Adrenal gland (tissue), 19 donors: ENCODE measurements at regions of chr14 and their contacts with region 1.

Region 1: GRCh38 chr14:69242311-69243224 is 17.4 kb upstream of the GALNT16 start:
- DNase-seq: peak; percentile 63 to 92 (median 74)
- H3K4me3 ChIP-seq: no peak overlapping the region
- H3K27ac ChIP-seq: peak overlapping the region in 2 of 5 donors; percentile 13 to 32
- H3K4me1 ChIP-seq: peaks cover 4 to 6% of the 10 kb centered on the region in 2 donors
- H3K27me3 ChIP-seq: no peaks in the 10 kb centered on the region
- CTCF ChIP-seq: peak; percentile 65 to 93 (median 85)
- POLR2A ChIP-seq: no peak

Region 2: GRCh38 chr14:69354383-69355153 is 112.0 kb after region 1 on chr14:
- intact Hi-C with region 1: loop called in 1 of 2 experiments (anchors 5 kb)
- DNase-seq: no peak
- H3K4me3 ChIP-seq: no peak overlapping the region
- H3K27ac ChIP-seq: peak overlapping the region in 1 of 5 donors; percentile 3
- H3K4me1 ChIP-seq: peaks cover 0 to 10% of the 10 kb centered on the region in 2 donors
- H3K27me3 ChIP-seq: no peaks in the 10 kb centered on the region
- CTCF ChIP-seq: no peak
- POLR2A ChIP-seq: no peak

Region 3: DNA sequence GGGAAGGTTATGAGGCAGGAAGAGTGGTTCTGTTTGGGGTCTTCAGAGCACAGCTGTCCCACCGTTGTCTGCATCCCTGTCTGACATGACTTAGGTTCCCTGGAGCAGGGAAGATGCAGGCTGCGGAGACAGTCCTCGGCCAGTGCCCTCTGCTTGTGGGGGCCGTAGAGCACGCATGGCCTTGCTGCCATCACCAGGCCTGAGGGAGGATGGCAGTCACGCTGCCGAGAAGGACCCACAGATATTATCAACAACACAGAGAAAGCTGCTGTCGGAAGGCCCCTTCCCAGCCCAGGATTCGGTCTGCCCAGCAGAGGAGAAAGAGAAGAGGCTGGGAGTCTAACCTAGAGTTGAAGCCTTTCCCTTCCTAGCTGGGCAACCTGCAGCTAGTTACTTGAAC is 120.5 kb after region 1 on chr14:
- intact Hi-C with region 1: loop called (anchors 5 kb)
- DNase-seq: peak; percentile 42 to 76 (median 63)
- H3K4me3 ChIP-seq: no peak overlapping the region
- H3K27ac ChIP-seq: no peak overlapping the region
- H3K4me1 ChIP-seq: no peaks in the 10 kb centered on the region
- H3K27me3 ChIP-seq: no peaks in the 10 kb centered on the region
- CTCF ChIP-seq: peak; percentile 25 to 72 (median 60)
- POLR2A ChIP-seq: no peak

Region 4: DNA sequence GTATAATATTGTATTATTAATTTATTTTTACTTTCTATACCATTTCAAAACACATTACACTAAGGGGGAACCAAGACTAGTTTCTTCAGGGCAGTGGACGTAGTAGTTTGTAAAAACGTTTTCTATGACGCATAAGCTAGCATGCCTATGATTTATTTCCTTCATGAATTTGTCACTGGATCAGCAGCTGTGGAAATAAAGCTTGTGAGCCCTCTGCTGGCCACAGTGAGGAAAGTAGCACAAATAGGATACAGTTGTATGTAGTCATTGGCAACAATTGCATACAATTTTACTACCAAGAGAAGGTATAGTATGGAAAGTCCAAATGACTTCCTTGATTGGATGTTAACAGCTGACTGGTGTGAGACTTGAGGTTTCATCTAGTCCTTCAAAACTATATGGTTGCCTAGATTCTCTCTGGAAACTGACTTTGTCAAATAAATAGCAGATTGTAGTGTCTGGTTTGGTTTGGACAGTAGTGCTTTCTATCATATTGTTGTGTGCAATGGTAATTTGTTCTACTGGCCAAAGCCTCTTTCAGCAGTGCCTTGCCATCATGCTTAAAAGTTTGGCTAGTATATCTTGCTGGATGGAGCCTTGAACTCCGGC is 217.6 kb after region 1 on chr14:
- intact Hi-C with region 1: loop called (anchors 2 to 5 kb)
- DNase-seq: peak; percentile 66 to 93 (median 79)
- H3K4me3 ChIP-seq: no peak overlapping the region
- H3K27ac ChIP-seq: no peak overlapping the region
- H3K4me1 ChIP-seq: peaks cover 0 to 3% of the 10 kb centered on the region in 2 donors
- H3K27me3 ChIP-seq: no peaks in the 10 kb centered on the region
- CTCF ChIP-seq: peak; percentile 58 to 96 (median 93)
- POLR2A ChIP-seq: no peak